Adrenal gland (tissue), 19 donors: ENCODE measurements at regions of chr3 and their contacts with region 1.

Region 1: DNA sequence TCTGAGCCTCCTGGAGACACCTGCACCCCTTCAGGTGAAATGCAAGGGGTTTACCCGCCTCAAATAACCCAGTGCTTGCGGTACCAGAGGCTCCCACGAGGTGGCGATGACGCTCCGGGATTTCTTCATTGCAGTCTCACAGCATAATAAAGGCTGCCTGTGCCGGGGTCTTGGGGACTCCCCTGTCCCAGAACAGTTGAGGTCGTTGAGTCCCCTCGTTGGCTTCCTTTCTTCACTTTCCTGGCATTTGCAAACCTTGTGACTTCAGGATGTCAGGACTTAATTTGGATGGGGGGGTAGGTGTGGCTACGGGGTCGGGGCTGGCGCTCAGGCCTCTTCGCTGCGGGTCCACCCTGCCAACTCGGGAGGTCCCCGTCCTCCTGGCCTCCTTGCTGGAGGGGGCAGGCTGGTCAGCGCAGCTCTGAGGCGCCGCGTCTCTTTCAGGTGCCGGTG is 1.3 kb downstream of the GNAT1 start:
- DNase-seq: peak; percentile 45 to 89 (median 71)
- H3K4me3 ChIP-seq: no peak overlapping the region
- H3K27ac ChIP-seq: no peak overlapping the region
- H3K4me1 ChIP-seq: peaks cover 0 to 7% of the 10 kb centered on the region in 2 donors
- H3K27me3 ChIP-seq: peaks cover 25% of the 10 kb centered on the region
- CTCF ChIP-seq: peak; percentile 82 to 91 (median 90)
- POLR2A ChIP-seq: no peak

Region 2: GRCh38 chr3:50121416-50122032 is 71.2 kb before region 1 on chr3:
- intact Hi-C with region 1: loop called (anchors 2 kb)
- DNase-seq: peak; percentile 71 to 87 (median 76)
- H3K4me3 ChIP-seq: no peak overlapping the region
- H3K27ac ChIP-seq: no peak overlapping the region
- H3K4me1 ChIP-seq: no peaks in the 10 kb centered on the region
- H3K27me3 ChIP-seq: no peaks in the 10 kb centered on the region
- CTCF ChIP-seq: peak; percentile 75 to 88 (median 84)
- POLR2A ChIP-seq: no peak

Region 3: DNA sequence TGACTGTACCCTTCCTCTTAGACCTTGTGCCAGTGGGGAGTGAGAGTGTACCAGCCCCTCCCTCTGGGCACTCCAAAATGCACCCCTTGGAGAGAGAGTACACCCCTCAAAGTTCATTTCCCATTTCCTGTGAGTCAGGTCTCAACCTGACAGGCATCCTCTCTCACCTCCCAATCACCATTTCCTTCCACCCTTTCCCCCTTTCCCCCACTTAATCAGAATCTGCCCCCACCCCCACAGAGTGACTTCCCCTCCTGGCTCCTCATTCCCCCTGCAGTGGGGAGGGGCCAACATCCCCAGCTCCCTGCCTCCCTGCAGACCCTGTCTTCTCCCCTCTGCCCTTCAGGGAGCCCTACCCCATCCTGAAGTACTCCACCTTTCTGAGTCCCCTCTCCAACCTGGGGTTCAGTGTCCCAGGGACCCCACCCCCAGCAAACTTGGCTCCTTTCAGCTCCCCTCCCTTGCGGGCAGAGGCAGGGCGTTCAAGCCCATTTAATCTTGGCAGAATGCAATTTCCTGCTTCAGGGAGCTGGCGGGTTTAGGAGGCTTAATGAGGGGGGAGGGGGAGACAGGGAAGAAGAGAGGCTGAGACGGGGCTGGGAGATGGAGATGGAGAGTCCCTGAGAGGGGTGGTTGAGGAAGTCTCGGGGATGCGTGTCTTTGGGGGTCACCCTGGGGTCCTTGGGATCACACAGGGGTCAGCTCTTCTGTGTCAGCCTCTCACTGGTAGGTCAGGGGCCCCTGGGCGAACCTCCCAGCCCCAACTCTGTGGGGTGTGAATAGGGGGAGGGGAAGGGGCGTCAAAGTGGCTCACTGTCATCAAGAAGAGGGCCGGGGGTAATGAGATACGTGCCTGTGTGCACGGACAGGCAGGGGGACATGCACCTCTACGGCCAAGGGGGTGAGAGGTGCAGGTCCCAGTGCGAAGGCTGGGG is 54.2 kb before region 1 on chr3:
- intact Hi-C with region 1: no loop called
- DNase-seq: no peak
- H3K4me3 ChIP-seq: no peak overlapping the region
- H3K27ac ChIP-seq: no peak overlapping the region
- H3K4me1 ChIP-seq: no peaks in the 10 kb centered on the region
- H3K27me3 ChIP-seq: no peaks in the 10 kb centered on the region
- CTCF ChIP-seq: no peak
- POLR2A ChIP-seq: no peak

Region 4: GRCh38 chr3:50227390-50228183 is 34.9 kb after region 1 on chr3:
- intact Hi-C with region 1: loop called (anchors 2 kb)
- DNase-seq: peak; percentile 87 to 91 (median 90)
- H3K4me3 ChIP-seq: peak overlapping the region; percentile 32 to 82 (median 66)
- H3K27ac ChIP-seq: peak overlapping the region in 3 of 5 donors; percentile 6 to 49 (median 48)
- H3K4me1 ChIP-seq: peaks cover 0 to 16% of the 10 kb centered on the region in 2 donors
- H3K27me3 ChIP-seq: no peaks in the 10 kb centered on the region
- CTCF ChIP-seq: peak; percentile 47 to 93 (median 76)
- POLR2A ChIP-seq: peak in 1 of 2 donors; percentile 25